ENCODE measurements at regions of chr6 and their contacts with region 1.

Region 1: DNA sequence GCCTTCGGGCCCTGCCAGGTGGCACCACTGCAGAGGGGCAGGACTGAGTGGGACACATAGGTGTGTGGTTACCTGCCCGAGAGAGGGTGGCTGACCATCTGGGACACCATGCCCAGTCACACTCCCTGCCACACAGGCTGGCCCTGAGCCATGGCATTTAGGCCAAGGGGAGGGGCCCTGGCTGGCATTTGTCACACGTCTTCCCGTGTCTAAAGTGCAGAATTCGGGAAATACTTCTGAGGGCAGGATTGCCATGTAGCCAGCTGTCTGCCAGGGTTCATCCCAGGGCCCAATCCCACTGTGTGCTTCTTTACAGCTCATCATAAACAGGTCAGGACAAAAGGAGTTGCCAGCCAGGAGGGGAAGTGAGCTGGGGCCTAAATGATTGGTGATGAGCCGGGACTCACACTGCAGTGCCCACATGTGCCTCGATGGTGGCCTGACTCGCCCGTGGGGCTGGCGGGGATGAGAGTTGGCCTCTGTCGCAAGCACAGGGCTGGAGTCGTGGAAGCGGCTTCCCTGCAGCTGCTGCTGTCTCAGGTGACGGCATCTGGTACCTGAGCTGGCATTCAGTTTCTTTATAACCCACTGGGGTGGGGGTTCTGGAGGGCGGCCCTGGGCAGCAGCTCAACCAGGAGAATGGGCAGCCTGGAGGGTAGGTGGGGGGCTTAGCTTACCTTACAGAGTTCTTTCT is 5.9 kb upstream of the UNC93A start:
- DNase-seq: no peak
- H3K4me3 ChIP-seq: no peak overlapping the region
- H3K27ac ChIP-seq: no peak overlapping the region
- H3K4me1 ChIP-seq: peaks cover 0 to 3% (median 0%) of the 10 kb centered on the region in 4 donors
- H3K27me3 ChIP-seq: no peaks in the 10 kb centered on the region
- CTCF ChIP-seq: no peak
- EP300 ChIP-seq: no peak
- POLR2A ChIP-seq: no peak

Region 2: DNA sequence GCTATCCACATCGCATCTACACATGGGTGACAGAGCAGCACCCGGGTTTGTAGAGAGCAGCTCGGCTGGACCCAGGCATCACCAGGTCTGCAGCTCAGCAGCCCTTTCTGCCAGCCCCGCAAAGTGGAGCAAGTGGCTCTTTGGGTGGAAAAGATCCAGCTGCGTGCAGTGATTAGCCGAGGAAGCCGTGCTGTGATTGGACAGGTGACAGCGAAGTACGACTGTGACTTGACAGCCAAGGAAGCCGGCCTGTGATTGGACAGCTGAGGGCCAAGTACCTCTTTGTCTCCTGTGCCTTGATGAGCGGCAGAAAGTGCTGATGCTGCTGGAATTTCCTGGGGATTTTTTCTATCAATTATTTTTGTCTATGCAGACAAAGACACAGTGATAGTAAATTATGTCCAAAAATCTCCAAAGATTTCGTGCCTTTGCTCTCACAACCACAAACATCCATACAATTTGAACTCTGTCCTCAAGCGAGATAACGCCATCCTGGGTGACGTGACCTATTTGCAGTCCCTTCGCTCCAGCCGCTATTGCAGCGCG is 65.2 kb before region 1 on chr6:
- in situ Hi-C with region 1: loop called in 1 of 4 experiments (anchors 10 kb)
- intact Hi-C with region 1: no loop called
- DNase-seq: no peak
- H3K4me3 ChIP-seq: no peak overlapping the region
- H3K27ac ChIP-seq: no peak overlapping the region
- H3K4me1 ChIP-seq: peaks cover 0 to 3% (median 0%) of the 10 kb centered on the region in 4 donors
- H3K27me3 ChIP-seq: no peaks in the 10 kb centered on the region
- CTCF ChIP-seq: no peak
- EP300 ChIP-seq: no peak
- POLR2A ChIP-seq: no peak

Region 3: DNA sequence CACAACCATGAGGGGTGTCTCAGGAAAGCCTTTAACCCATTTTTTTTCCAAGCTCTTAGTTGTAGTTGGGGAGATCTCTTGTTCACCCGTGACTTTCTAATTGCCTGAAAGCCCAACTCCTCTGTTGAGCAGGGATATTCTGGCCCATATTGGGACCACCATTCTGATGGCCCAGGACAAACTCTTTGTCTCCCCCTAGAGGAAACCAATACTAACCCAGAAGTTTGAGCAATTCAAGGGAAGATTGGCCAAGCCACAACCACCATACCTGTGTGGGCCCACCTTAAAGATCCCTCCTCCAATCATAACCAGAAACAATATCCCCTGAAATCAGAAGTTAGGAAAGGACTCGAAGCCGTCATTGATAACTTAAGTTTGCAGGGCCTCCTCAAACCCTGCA is 1835.8 kb after region 1 on chr6:
- in situ Hi-C with region 1: no loop called
- intact Hi-C with region 1: no loop called
- DNase-seq: no peak
- H3K4me3 ChIP-seq: no peak overlapping the region
- H3K27ac ChIP-seq: no peak overlapping the region
- H3K4me1 ChIP-seq: no peaks in the 10 kb centered on the region
- H3K27me3 ChIP-seq: no peaks in the 10 kb centered on the region
- CTCF ChIP-seq: no peak
- EP300 ChIP-seq: no peak
- POLR2A ChIP-seq: no peak

Measured in transverse colon (tissue), 4 donors.